Right ventricle myocardium inferior (tissue), 1 donor: ENCODE measurements at regions of chr2 and their contacts with region 1.

Region 1: DNA sequence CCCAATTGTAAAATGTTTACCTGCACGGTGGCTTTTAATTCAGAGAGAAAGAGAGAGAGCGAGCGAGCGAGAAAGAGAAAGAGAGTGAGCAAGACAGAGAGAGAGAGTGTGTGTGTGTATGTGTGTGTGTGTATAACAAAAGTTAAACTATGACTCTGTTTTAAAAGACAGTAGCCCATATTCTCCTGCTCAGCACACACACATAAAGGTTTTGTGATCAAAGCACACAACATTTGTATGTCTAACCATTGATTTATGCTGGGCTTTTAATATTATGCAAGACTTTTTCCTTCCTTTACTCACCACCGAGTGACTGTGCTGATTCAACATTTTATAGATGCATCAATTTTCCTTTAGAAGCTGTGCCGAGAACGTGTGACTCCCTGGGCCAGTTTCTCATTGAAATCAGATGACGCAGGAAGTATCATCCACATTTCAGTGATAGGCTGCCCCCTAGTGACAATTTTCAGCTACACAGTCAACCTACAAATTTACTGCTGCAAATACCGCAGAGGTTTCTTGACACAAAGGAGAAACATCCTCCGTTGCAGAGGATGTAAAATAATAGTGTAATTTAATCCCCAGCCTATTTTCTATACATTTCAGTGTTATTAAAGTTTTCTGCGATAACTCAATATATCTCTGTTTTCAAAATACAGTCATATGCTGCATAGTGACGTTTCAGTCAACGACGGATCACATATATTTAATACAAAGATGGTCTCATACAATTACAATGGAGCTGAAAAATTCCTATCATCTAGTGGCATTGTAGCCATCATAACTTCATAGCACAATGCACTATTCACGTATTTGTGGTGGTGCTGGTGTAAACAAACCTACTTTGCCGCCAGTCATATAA is 165.9 kb upstream of the TANK start:
- DNase-seq: no peak
- ATAC-seq: peak; percentile 87

Region 2: GRCh38 chr2:160109936-160110673 is 884.3 kb before region 1 on chr2:
- intact Hi-C with region 1: loop called (anchors 5 kb)
- DNase-seq: peak; percentile 74
- ATAC-seq: peak; percentile 67